ENCODE measurements at regions of chr18 and their contacts with region 1.

Region 1: GRCh38 chr18:50194631-50195532 is at the start of gene MYO5B:
- DNase-seq: peak; percentile 95
- H3K4me3 Mint-ChIP-seq: peak within 1 kb of the TSS; percentile 96
- H3K27ac Mint-ChIP-seq: peak within 1 kb of the TSS; percentile 82
- H3K4me1 Mint-ChIP-seq: peaks cover 33% of the 10 kb centered on the region
- H3K27me3 Mint-ChIP-seq: peaks cover 13% of the 10 kb centered on the region
- CTCF ChIP-seq: peak; percentile 50
- total RNA-seq, gene MYO5B: 56.7 and 59.1 TPM in 2 replicates

Region 2: DNA sequence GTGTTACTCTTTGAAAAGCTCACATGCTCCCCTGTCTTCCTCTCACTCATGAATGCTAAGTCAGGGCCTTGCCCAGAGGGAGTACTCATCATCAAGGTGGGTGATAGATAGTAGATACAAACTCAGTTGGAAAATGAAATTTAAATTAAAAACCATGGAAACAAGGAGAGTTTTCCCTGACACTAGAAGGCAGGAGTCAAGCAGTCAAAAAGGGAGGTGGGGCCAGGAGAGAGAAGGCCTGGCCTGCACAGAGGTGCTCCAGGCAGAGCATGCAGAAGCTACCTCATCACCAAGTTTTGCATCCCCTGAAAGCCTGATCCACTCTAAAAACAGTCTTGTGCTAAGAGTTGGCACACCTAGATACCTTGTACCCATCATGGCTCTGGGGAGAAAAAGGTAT is 143.6 kb before region 1 on chr18:
- CTCF ChIA-PET with region 1: interaction called, 6 read pairs
- intact Hi-C with region 1: loop called (anchors 1 kb)
- DNase-seq: peak; percentile 50
- H3K4me3 Mint-ChIP-seq: no peak overlapping the region
- H3K27ac Mint-ChIP-seq: no peak overlapping the region
- H3K4me1 Mint-ChIP-seq: no peaks in the 10 kb centered on the region
- H3K27me3 Mint-ChIP-seq: no peaks in the 10 kb centered on the region
- CTCF ChIP-seq: peak; percentile 39

Region 3: GRCh38 chr18:50057009-50057408 is 137.9 kb before region 1 on chr18:
- CTCF ChIA-PET with region 1: interaction called, 6 read pairs
- intact Hi-C with region 1: loop called (anchors 2 kb)
- DNase-seq: no peak
- H3K4me3 Mint-ChIP-seq: no peak overlapping the region
- H3K27ac Mint-ChIP-seq: no peak overlapping the region
- H3K4me1 Mint-ChIP-seq: peaks cover 21% of the 10 kb centered on the region
- H3K27me3 Mint-ChIP-seq: no peaks in the 10 kb centered on the region
- CTCF ChIP-seq: peak; percentile 25

Region 4: DNA sequence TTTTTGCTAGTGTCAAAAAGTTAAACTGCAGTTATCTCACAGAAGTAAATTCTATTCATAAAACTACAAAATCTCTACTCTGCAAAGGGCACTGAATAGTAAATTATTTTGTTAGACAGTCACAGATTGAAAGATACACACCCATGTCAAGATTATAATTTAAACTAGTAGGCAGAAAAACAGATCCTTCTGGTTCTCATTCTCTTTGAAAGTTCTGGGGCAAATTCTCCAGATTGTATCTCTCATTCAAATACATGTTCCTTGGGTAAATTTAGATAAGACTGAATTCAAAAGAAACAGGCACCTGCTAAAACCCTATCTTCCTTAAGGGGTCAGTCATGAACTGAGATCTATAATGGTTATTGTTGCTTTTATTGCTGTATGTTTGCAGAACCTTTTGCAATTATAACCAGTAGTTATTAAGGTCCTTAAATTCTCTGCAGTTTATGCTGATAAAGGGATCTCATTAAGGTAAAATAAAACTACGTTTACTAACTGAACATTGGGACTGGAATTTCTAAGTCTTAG is 83.6 kb before region 1 on chr18:
- CTCF ChIA-PET with region 1: interaction called, 8 read pairs
- intact Hi-C with region 1: loop called (anchors 1 kb)
- DNase-seq: no peak
- H3K4me3 Mint-ChIP-seq: no peak overlapping the region
- H3K27ac Mint-ChIP-seq: no peak overlapping the region
- H3K4me1 Mint-ChIP-seq: peaks cover 86% of the 10 kb centered on the region
- H3K27me3 Mint-ChIP-seq: no peaks in the 10 kb centered on the region
- CTCF ChIP-seq: no peak

Region 5: GRCh38 chr18:50128506-50129271 is 66.2 kb before region 1 on chr18:
- CTCF ChIA-PET with region 1: no interaction called
- intact Hi-C with region 1: loop called (anchors 5 kb)
- DNase-seq: peak; percentile 51
- H3K4me3 Mint-ChIP-seq: peak overlapping the region; percentile 32
- H3K27ac Mint-ChIP-seq: peak overlapping the region; percentile 67
- H3K4me1 Mint-ChIP-seq: peaks cover 71% of the 10 kb centered on the region
- H3K27me3 Mint-ChIP-seq: no peaks in the 10 kb centered on the region
- CTCF ChIP-seq: no peak

Region 6: DNA sequence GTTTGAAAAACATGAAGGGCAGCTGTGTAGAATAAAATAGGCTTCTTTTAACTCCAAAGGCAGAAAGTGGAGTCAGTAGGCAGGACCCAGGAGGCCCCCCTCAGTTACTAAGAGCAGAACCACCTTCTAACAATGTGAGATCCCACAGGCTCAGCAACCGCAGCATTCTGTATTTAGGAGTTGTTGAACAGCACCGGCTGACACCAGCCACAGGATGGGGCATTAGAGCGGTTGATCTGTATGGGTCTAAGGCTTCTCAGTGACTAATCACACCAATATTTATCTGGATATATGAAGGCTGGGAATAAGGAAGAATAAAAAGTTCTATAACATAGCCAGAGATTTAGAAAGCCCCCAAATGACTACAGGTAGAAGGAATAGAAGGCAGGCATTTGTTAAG is 51.6 kb before region 1 on chr18:
- CTCF ChIA-PET with region 1: interaction called, 3 read pairs
- intact Hi-C with region 1: loop called (anchors 5 kb)
- DNase-seq: no peak
- H3K4me3 Mint-ChIP-seq: peak overlapping the region; percentile 12
- H3K27ac Mint-ChIP-seq: peak overlapping the region; percentile 59
- H3K4me1 Mint-ChIP-seq: peaks cover 54% of the 10 kb centered on the region
- H3K27me3 Mint-ChIP-seq: no peaks in the 10 kb centered on the region
- CTCF ChIP-seq: no peak